ENCODE measurements at regions of chr6 and their contacts with region 1.

Region 1: DNA sequence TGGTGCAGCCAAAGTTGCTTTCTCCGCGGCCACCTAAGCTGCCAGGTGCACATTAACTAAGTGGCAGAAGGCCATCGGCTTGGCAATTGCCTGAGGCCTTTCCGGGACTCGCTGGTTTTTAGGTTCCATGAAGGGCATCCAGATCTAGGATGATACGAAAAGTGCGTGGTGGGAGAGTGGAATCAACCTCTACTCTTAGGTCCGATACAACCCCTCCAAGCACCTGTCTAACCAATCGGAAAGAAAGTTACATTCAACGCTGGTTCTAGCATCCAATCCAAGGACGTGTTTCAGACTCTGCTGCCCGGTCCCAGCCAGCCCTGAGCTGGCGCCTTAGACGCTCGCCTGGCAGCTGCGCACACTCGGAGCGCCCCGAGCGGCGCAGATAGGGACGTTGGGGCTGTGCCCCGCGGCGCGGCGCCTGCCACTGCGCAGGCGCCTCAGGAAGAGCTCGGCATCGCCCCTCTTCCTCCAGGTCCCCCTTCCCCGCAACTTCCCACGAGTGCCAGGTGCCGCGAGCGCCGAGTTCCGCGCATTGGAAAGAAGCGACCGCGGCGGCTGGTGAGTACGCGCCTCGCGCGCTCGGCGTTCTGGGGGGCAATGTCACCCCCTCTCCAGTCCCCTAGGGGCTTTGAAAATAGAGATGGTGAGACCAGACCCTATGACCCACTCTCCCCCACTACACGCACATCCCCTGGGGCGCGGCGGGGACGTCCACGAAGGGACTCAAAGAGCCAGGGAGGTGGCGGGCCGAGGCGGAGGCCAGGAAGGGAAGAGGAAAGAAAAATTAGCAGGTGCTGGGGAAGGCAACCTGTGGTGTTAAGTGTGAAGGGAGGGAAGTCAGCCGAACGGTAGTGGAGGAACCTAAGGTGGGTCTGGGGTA is at the start of gene ENPP4:
- DNase-seq: peak; percentile 43 to 94
- H3K4me3 ChIP-seq: peak within 1 kb of the TSS; percentile 76 to 94
- H3K27ac ChIP-seq: peak within 1 kb of the TSS; percentile 64 to 82
- H3K4me1 ChIP-seq: peaks cover 0 to 6% of the 10 kb centered on the region in 2 donors
- H3K27me3 ChIP-seq: no peaks in the 10 kb centered on the region
- CTCF ChIP-seq: peak in 2 of 3 experiments; percentile 2 to 16
- total RNA-seq, gene ENPP4: 12.5 TPM

Region 2: DNA sequence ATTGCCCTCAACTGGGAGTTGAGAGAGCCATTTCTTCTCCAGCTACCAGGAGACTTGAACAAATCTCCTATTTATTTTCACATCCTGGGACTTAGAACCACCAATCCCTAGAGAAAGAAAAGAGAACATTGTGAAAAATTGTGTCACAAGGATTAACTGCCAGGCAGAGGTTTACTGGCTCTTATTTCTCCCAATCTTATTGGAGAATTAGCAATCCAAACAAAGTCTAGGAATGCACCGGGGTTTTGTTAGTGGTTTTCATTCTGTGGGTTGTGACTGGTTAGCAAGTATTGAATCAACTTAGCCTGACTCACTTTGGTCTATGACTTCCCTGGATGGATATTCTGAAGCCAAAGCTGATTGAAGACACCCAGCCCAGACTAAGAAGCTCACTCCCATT is 62.1 kb after region 1 on chr6:
- intact Hi-C with region 1: loop called (anchors 5 kb)
- DNase-seq: no peak
- H3K4me3 ChIP-seq: no peak overlapping the region
- H3K27ac ChIP-seq: peak overlapping the region; percentile 47 to 71
- H3K4me1 ChIP-seq: peaks cover 0 to 15% of the 10 kb centered on the region in 2 donors
- H3K27me3 ChIP-seq: no peaks in the 10 kb centered on the region
- CTCF ChIP-seq: no peak

Region 3: GRCh38 chr6:46652603-46653438 is 523.0 kb after region 1 on chr6 and contains the starts of genes CYP39A1 and SLC25A27:
- intact Hi-C with region 1: loop called (anchors 2 kb)
- DNase-seq: peak; percentile 70 to 95
- H3K4me3 ChIP-seq: peak within 1 kb of the TSS; percentile 85 to 90
- H3K27ac ChIP-seq: peak within 1 kb of the TSS; percentile 86 to 87
- H3K4me1 ChIP-seq: peaks cover 0 to 4% of the 10 kb centered on the region in 2 donors
- H3K27me3 ChIP-seq: no peaks in the 10 kb centered on the region
- CTCF ChIP-seq: no peak
- total RNA-seq, gene CYP39A1: 1.4 TPM
- total RNA-seq, gene SLC25A27: 11.7 TPM